Activated CD4-positive, alpha-beta memory T cell treated with anti-CD3 and anti-CD28 coated beads for 36 hours (primary cell): ENCODE measurements at regions of chr4 and their contacts with region 1.

Region 1: DNA sequence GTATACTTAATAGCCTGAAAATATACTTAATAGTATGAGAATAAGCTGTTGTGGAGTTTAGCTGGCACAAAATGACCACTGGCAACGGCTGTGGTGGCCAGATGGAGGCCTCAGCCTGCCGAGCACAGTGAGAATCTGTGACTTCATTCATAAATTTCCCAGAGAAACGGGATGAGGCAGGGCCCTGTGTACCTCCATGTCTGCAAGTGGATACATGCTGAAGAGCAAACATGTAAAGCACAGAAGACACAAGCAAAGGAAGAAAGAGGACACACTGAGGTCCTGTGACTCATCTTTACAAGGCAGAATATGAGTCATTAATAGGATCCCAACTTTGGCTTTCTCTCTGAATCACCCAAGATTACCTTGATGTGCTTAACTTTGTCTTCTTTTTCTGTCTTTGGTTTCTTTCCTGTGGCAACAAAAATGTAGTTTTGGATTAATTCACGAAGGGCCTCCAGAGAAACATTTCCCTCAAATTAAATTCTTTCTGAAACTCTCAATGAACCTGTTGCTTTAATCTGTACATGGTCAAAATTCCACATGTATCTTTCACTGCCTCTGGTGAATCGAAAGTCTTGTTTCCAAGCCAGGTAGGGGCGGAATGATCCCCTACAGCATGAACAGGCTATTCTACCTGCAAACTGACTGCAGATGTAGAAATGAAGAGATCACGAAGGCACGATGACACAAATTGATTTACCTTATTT is 56.4 kb downstream of the IRF2 start:
- DNase-seq: peak; percentile 23
- H3K4me3 Mint-ChIP-seq: peak overlapping the region; percentile 23
- H3K27ac Mint-ChIP-seq: peak overlapping the region; percentile 91
- H3K4me1 Mint-ChIP-seq: peaks cover 90% of the 10 kb centered on the region
- H3K27me3 Mint-ChIP-seq: no peaks in the 10 kb centered on the region

Region 2: GRCh38 chr4:184287697-184288255 is 130.2 kb before region 1 on chr4:
- CTCF ChIA-PET with region 1: interaction called, 5 read pairs
- POLR2A ChIA-PET with region 1: interaction called, 15 read pairs
- intact Hi-C with region 1: loop called (anchors 1 kb)
- DNase-seq: no peak
- H3K4me3 Mint-ChIP-seq: no peak overlapping the region
- H3K27ac Mint-ChIP-seq: no peak overlapping the region
- H3K4me1 Mint-ChIP-seq: peaks cover 61% of the 10 kb centered on the region
- H3K27me3 Mint-ChIP-seq: peaks cover 4% of the 10 kb centered on the region

Region 3: GRCh38 chr4:184457535-184458249 is 39.7 kb after region 1 on chr4:
- CTCF ChIA-PET with region 1: interaction called, 3 read pairs
- POLR2A ChIA-PET with region 1: interaction called, 14 read pairs
- intact Hi-C with region 1: loop called (anchors 1 kb)
- DNase-seq: no peak
- H3K4me3 Mint-ChIP-seq: no peak overlapping the region
- H3K27ac Mint-ChIP-seq: no peak overlapping the region
- H3K4me1 Mint-ChIP-seq: peaks cover 74% of the 10 kb centered on the region
- H3K27me3 Mint-ChIP-seq: no peaks in the 10 kb centered on the region

Region 4: DNA sequence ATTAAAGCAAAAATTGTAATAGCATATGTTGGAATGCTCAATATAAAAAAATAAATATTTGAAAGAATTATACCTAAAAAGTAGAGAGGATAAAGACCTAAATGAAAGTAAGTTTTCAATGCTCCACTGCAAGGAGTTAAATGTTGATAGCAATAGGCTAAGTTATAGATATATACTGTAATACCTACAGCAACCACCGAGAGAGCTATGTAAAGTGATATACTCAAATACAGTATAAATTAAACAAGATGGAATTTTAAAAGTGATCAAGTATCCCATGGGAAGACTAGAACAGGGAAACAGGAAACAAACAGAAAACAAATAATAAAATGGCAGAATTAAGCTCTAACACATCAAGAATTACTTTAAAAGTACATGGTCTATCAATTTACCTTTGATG is 157.3 kb after region 1 on chr4:
- CTCF ChIA-PET with region 1: no interaction called
- POLR2A ChIA-PET with region 1: no interaction called
- intact Hi-C with region 1: no loop called
- DNase-seq: no peak
- H3K4me3 Mint-ChIP-seq: no peak overlapping the region
- H3K27ac Mint-ChIP-seq: no peak overlapping the region
- H3K4me1 Mint-ChIP-seq: peaks cover 17% of the 10 kb centered on the region
- H3K27me3 Mint-ChIP-seq: no peaks in the 10 kb centered on the region

Region 5: DNA sequence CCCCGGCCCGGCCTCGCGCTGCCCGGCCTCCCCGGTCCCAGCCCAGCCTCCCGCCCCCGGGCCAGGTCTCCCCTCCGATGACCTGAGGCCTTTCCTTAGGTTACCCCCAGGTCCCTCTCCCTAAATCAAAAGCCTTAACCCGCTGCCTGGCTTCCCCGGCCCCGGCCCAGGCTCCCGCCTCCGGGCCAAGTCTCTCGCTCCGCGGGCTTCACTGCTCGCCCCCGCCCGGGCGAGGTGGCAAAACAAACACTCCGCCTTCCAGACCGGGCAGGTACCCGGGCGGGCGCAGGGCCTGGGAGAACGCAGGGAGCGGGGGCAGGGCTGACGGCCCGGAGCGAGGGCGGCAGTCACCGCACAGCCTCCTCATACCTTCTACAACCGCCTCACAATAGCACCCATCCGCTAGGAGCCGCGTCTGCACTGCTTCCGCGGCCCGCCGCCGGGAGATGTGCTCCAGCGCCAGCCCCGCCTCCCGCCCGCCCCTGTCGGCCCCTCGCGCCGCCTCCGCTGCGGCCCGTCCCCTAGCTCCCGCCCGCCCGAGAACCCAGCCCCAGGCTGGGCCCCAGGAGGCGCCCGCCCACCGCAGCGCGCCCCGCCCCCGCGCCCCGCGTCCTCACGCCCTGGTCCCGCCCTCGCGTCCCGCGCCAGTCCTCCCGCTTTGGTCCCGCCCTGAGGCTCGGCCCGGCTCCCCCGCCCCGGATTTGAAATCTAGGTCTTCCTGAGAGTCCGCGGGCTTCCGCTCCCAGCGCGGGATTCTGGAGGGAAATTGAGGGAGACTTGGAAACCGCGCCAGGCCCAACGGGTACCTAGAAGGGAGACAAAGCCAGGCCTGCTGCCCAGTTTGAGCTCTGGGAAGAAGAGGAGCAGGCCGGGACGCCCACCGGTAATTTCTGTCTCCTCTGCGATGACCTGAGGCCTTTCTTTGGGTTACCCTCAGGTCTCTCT is 231.3 kb after region 1 on chr4 and contains the starts of genes CASP3 and PRIMPOL:
- CTCF ChIA-PET with region 1: interaction called, 3 read pairs
- POLR2A ChIA-PET with region 1: interaction called, 7 read pairs
- intact Hi-C with region 1: loop called (anchors 2 kb)
- DNase-seq: peak; percentile 98
- H3K4me3 Mint-ChIP-seq: peak within 1 kb of the TSS; percentile 91
- H3K27ac Mint-ChIP-seq: peak within 1 kb of the TSS; percentile 91
- H3K4me1 Mint-ChIP-seq: peaks cover 50% of the 10 kb centered on the region
- H3K27me3 Mint-ChIP-seq: no peaks in the 10 kb centered on the region
- total RNA-seq, gene CASP3: 54.0 to 54.4 TPM
- total RNA-seq, gene PRIMPOL: 23.1 to 27.1 TPM

Region 6: GRCh38 chr4:184745831-184746795 is 328.2 kb after region 1 on chr4:
- CTCF ChIA-PET with region 1: no interaction called
- POLR2A ChIA-PET with region 1: no interaction called
- intact Hi-C with region 1: no loop called
- DNase-seq: peak; percentile 80
- H3K4me3 Mint-ChIP-seq: no peak overlapping the region
- H3K27ac Mint-ChIP-seq: no peak overlapping the region
- H3K4me1 Mint-ChIP-seq: peaks cover 8% of the 10 kb centered on the region
- H3K27me3 Mint-ChIP-seq: no peaks in the 10 kb centered on the region